Calu3 (cell line): ENCODE measurements at regions of chr7 and their contacts with region 1.

Region 1: DNA sequence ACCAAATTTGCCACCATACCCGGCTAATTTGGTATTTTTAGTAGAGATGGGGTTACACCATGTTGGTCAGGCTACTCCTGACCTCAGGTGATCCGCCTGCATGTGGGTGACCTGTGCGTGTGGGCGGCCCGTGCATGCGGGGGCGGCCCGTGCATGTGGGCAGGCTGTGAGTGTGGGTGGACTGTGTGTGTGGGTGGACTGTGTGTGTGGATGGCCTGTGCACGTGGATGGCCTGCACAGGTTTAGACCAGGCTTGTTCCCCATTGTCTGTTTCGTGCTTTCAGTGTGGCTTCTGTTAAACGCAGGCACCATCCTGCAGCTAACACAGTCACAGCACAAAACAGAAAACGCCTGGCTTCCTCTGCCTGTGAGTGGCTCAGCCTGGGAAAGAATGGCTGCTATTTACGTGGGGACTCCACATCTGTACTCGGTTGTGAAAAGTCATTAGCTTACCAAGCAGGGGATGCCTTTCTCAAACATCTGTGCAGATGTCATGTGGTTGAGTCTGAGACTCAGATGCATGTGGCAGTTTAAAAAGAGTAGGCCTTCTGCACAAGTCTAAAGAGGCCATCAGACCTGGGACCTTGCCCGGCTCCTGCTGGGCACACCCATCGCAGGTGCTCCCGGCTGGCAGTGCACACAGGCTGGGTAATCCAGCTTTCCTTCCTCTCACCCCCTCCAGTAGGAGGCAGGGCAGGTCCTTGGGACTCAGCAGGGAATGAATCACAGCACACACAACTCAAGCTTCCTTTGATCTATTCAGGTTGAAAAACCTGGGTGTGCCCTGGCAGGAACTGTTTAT is 91.6 kb downstream of the COBL start:
- DNase-seq: peak; percentile 86
- H3K4me3 Mint-ChIP-seq: no peak overlapping the region
- H3K27ac Mint-ChIP-seq: no peak overlapping the region
- H3K4me1 Mint-ChIP-seq: peaks cover 15% of the 10 kb centered on the region
- H3K27me3 Mint-ChIP-seq: no peaks in the 10 kb centered on the region
- CTCF ChIP-seq: peak; percentile 62

Region 2: GRCh38 chr7:50068961-50069551 is 1156.0 kb before region 1 on chr7:
- CTCF ChIA-PET with region 1: no interaction called
- intact Hi-C with region 1: no loop called
- DNase-seq: peak; percentile 65
- H3K4me3 Mint-ChIP-seq: peak overlapping the region; percentile 72
- H3K27ac Mint-ChIP-seq: peak overlapping the region; percentile 67
- H3K4me1 Mint-ChIP-seq: peaks cover 23% of the 10 kb centered on the region
- H3K27me3 Mint-ChIP-seq: no peaks in the 10 kb centered on the region
- CTCF ChIP-seq: no peak

Region 3: DNA sequence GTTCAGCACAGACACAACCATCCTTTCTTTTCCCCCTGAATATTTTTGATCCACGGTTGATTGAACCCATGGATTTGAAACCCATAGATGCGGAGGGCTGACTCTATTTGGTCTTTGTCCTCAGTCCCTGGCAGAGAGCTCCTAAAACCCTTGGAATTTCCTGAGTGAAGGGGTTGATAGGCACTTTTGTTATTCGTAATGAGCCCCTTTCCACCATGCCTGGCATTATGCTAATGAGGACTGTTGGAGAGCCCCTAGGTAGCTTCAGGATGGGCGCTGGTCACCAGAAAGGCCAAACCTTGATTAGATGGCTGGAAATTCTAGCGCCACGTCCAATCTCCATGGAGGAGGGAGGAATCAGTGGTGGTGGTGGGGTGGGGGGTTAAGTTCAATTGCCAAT is 236.5 kb before region 1 on chr7:
- CTCF ChIA-PET with region 1: no interaction called
- intact Hi-C with region 1: no loop called
- DNase-seq: no peak
- H3K4me3 Mint-ChIP-seq: no peak overlapping the region
- H3K27ac Mint-ChIP-seq: no peak overlapping the region
- H3K4me1 Mint-ChIP-seq: peaks cover 6% of the 10 kb centered on the region
- H3K27me3 Mint-ChIP-seq: no peaks in the 10 kb centered on the region
- CTCF ChIP-seq: no peak

Region 4: DNA sequence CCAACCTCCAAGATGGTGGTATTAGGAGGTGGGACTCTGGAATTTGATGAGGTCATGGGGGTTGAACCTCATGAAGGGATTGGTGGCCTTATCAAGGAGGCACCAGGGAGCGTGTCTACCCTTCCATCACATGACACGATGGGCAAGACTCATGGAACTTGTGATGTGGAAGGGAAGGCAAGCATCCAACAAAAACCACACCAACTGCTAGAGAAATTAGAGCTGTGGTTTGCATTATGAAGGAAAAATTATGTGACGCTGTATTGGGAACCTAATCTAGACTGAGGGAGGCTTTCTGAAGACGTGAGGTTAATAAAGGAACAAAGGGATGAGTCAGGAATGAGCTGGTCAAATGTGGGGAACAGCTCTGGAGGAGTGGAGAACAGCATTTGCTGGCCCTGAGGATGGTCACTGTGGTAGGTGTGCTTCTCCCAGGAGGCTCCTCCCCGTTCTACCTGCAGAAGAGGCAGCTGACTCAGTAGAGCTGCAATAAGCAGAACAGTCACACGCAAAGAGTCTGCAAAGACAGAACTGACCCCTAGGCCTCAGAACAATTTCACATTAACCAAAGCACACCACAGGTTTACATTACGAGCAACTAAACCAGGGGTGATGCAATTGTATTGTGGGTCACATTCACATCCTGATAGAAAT is 205.7 kb before region 1 on chr7:
- CTCF ChIA-PET with region 1: no interaction called
- intact Hi-C with region 1: no loop called
- DNase-seq: no peak
- H3K4me3 Mint-ChIP-seq: no peak overlapping the region
- H3K27ac Mint-ChIP-seq: no peak overlapping the region
- H3K4me1 Mint-ChIP-seq: no peaks in the 10 kb centered on the region
- H3K27me3 Mint-ChIP-seq: no peaks in the 10 kb centered on the region
- CTCF ChIP-seq: no peak

Region 5: GRCh38 chr7:51255536-51256208 is 30.7 kb after region 1 on chr7:
- CTCF ChIA-PET with region 1: interaction called, 14 read pairs
- intact Hi-C with region 1: no loop called
- DNase-seq: peak; percentile 67
- H3K4me3 Mint-ChIP-seq: peak overlapping the region; percentile 29
- H3K27ac Mint-ChIP-seq: peak overlapping the region; percentile 45
- H3K4me1 Mint-ChIP-seq: peaks cover 65% of the 10 kb centered on the region
- H3K27me3 Mint-ChIP-seq: no peaks in the 10 kb centered on the region
- CTCF ChIP-seq: no peak

Region 6: GRCh38 chr7:51299391-51300133 is 74.5 kb after region 1 on chr7:
- CTCF ChIA-PET with region 1: interaction called, 5 read pairs
- intact Hi-C with region 1: loop called (anchors 2 kb)
- DNase-seq: no peak
- H3K4me3 Mint-ChIP-seq: no peak overlapping the region
- H3K27ac Mint-ChIP-seq: no peak overlapping the region
- H3K4me1 Mint-ChIP-seq: peaks cover 26% of the 10 kb centered on the region
- H3K27me3 Mint-ChIP-seq: no peaks in the 10 kb centered on the region
- CTCF ChIP-seq: no peak

Region 7: DNA sequence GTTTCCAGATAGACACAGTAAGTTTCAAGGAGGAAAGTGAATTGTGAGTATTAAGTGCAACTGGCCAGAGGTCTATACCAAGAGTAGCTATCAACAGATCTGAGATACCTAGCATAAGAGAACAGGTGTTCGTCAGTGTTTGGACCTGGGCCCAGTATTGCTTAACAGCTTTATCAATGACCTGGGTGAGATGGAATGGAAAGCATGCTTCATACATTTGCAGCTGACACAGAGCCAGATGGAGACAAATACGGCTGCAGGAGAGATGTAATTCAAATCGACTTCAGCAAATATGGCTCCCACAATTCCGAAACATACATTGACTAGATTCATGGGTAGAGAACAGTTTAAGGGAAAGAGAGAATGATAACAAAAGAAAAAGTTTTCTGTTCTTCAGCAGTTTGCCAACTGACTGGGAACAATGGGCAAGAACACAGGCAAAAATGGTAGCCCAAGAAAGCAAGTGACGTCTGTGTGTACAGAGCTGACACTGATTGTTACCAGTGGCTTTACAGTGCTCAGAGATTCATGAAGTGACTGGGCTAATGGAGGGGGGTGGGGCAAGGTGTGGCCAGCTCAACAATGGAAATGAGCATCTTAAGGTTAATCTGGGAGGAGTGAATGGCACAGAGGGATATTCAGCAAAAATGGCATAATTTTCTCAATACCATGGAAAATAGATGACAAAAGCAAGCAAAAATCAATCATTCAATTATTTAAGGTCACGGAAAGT is 119.6 kb after region 1 on chr7:
- CTCF ChIA-PET with region 1: interaction called, 11 read pairs
- intact Hi-C with region 1: no loop called
- DNase-seq: peak; percentile 93
- H3K4me3 Mint-ChIP-seq: peak overlapping the region; percentile 55
- H3K27ac Mint-ChIP-seq: peak overlapping the region; percentile 79
- H3K4me1 Mint-ChIP-seq: peaks cover 68% of the 10 kb centered on the region
- H3K27me3 Mint-ChIP-seq: no peaks in the 10 kb centered on the region
- CTCF ChIP-seq: no peak

Region 8: DNA sequence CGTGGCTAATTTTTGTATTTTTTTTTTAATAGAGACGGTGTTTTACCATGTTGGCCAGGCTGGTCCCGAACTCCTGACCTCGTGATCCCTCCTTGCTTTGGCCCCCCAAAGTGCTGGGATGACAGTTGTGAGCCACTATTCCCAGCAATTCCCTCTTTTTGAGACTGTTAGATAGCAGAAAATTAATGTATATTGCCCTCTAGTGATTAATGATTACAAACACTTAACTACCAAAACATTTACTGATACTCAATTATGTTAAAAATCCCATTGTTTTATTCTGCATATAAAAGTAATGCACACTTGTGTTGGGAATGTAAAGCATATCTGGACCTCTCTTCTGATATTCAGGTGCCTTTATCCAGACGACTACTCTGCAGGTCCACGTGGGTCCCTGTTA is 132.8 kb after region 1 on chr7:
- CTCF ChIA-PET with region 1: interaction called, 16 read pairs
- intact Hi-C with region 1: no loop called
- DNase-seq: no peak
- H3K4me3 Mint-ChIP-seq: no peak overlapping the region
- H3K27ac Mint-ChIP-seq: no peak overlapping the region
- H3K4me1 Mint-ChIP-seq: peaks cover 30% of the 10 kb centered on the region
- H3K27me3 Mint-ChIP-seq: peaks cover 12% of the 10 kb centered on the region
- CTCF ChIP-seq: peak; percentile 41

Region 9: DNA sequence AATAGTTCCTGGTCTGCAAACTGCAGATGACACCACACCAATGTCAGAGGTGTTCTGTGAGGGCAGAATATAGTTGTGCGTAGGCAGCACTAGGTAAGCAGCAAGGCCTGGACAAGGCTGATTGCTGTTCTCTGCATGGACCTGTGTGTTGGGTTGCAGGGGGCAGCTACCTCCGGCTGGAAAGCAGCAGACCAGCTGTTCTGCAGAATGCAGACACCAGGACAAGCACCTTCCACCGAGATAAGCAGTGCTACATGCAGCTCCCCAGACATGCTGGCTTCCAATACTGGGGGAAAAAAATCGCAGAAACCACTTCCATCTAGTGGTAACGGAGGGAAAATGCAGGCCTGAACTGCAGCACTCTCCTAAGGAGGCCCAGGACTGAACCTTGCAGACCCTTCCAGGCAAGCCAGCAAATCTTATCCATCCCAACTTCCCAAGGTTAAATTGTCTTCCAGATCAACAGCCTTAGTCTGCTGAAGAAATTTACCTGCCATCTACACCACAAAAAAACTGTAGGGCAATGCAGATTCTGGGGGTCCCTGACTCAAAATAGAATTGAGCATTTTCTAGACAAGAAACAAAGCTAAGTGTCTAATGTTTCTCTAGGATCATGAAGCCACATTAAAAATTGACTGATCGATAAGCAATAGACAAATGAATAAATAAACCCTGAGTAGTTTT is 142.1 kb after region 1 on chr7:
- CTCF ChIA-PET with region 1: interaction called, 96 read pairs
- intact Hi-C with region 1: loop called (anchors 1 kb)
- DNase-seq: peak; percentile 76
- H3K4me3 Mint-ChIP-seq: no peak overlapping the region
- H3K27ac Mint-ChIP-seq: no peak overlapping the region
- H3K4me1 Mint-ChIP-seq: peaks cover 9% of the 10 kb centered on the region
- H3K27me3 Mint-ChIP-seq: peaks cover 13% of the 10 kb centered on the region
- CTCF ChIP-seq: peak; percentile 90